ENCODE measurements at regions of chr10 and their contacts with region 1.

Region 1: DNA sequence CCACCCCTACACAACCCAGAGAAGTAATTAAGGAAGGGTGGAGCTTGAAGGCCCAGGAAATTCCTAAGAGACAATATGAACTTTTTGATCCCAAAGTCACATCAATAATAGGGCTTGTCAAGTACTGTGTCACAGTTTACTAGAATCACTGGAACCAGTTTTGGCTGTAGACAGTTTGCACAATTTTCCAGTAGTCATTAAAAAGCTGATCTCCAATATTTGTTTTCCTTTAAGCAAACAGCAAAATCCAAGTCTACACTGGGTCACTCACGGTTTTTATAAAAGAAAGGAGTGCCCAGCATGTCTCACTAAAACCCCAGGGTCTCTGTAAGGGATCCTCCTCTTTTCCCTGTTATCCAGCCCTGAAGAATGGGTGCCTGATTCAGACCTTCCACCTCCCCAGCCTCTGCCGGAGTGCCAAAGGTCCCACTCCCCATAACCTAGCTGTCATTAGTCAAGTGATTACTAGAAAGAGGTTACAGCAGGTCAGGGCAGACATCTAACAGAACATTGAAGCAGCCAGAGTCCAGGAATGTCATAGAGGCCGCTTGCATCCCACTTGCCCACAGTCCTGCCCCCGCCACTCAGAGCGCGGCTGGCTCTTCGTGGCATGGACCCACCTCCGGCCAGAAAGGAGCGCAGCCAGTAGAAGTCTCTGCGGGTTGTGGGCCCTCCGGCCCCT is 556 bp downstream of the SLC25A16 start:
- DNase-seq: no peak
- H3K4me3 Mint-ChIP-seq: peak overlapping the region; percentile 90
- H3K27ac Mint-ChIP-seq: peak overlapping the region; percentile 77
- H3K4me1 Mint-ChIP-seq: peaks cover 9% of the 10 kb centered on the region
- H3K27me3 Mint-ChIP-seq: no peaks in the 10 kb centered on the region

Region 2: DNA sequence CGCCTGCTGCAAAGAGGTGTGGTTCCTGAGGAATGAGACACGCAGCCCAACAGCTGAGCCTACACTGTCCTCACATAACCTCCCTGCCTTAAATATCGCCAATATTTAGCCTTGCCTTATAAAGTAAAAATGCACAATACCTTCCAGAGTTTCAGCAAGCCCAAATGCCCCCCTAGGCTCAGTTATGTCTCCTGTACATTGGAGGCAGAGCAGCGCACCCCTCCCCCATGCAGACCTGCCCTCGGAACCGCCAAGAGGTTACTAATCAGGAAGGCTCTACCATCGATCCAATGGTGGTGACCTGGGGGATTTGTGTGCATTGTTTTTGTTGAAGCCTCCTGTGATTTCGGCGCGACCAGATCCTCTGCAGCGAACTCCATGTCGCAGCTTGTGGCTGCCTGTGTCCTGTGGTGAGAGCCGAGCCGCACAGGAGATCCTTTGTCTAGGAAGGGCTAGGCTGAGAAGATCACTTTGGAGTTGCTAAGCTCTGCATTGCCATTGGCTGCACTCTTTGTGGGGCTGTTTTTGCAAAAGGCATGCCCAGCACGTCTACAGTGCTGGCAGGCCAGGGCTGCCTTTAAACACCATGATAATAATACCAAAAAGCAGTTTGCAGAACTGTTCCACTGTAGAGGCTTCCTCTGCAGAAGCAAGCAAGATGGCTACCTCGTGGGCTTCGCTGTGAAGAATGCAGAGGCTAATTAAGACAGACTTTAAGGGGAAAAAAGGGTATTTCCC is 73.4 kb after region 1 on chr10:
- CTCF ChIA-PET with region 1: no interaction called
- POLR2A ChIA-PET with region 1: no interaction called
- intact Hi-C with region 1: loop called (anchors 2 kb)
- DNase-seq: peak; percentile 65
- H3K4me3 Mint-ChIP-seq: peak overlapping the region; percentile 81
- H3K27ac Mint-ChIP-seq: peak overlapping the region; percentile 67
- H3K4me1 Mint-ChIP-seq: peaks cover 23% of the 10 kb centered on the region
- H3K27me3 Mint-ChIP-seq: no peaks in the 10 kb centered on the region

Region 3: DNA sequence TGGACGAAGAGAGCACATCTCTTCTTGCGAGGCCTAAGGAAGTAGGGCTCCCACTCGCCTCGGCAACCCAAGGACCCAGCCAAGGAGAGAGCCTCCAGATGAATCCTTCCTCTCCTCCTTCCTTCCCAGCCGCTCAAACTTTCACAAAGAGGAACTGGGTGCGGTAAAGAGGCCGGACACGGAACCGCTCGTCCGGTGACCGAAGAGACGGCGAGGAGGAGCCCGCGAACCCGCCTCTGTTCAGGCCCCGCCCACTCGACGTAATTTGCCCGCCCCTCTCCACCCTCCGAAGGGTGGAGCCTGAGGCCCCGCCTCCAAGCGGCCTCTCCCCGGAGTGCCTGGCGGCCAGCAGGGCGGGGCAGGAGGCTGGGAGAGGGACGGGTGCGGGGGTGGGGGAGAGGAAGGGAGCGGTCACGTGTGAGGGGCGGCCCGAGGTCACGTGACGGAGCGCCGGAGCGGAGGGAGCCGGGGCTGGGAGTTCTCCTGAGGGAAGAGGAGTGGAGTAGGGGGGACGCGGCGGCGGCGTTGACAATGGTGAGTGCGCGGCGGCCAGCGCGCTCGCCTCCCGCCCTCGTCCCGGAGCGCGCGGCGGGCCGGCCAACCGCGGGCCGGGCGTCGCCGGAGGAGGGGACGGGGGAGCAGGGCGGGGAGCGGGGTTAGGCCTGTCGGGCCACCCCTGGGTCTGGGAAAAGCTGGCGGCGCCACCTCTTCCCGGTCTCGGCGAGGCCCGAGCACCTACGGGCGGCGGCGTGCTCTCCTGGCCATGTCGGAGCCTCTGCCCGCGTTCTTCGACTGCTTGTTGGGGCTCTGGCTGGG is 597.2 kb after region 1 on chr10 and contains the start of gene VPS26A:
- CTCF ChIA-PET with region 1: no interaction called
- POLR2A ChIA-PET with region 1: no interaction called
- intact Hi-C with region 1: no loop called
- DNase-seq: peak; percentile 99
- H3K4me3 Mint-ChIP-seq: peak within 1 kb of the TSS; percentile 88
- H3K27ac Mint-ChIP-seq: peak within 1 kb of the TSS; percentile 92
- H3K4me1 Mint-ChIP-seq: peaks cover 25% of the 10 kb centered on the region
- H3K27me3 Mint-ChIP-seq: no peaks in the 10 kb centered on the region
- total RNA-seq, gene VPS26A: 44.6 to 51.4 TPM

Measured in activated CD4-positive, alpha-beta memory T cell treated with anti-CD3 and anti-CD28 coated beads for 36 hours (primary cell).